ENCODE measurements at regions of chr1 and their contacts with region 1.

Region 1: DNA sequence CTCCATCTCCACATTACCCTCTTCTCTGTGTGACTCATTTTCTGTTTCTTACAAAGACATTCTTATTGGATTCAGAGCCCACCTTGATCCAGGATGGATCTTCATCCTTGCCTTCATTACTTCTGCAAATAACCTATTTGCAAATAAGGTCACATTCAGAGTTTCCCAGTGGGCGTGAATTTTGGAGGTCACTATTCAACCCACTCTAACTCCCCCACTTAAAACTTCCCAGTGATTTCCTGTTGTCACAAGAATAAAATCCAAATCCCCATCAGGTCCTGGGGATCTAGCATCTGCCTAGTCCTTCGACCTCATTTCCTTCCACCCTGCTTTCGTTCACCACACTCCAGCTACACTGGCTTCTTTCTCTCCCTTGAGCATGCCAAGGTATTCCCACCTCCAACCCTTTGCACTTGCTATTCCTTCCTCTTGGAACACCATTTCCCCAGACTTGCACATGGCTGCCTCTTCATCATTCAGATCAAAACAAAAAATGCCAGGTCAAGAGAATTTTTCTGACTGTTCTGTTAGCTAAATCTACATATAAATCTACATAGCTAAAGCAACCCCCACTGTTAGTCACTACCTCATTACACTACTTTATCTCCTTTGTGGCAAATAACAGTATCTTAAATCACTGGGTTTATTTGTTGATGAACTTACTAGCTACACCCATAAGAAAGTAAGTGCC is 187.2 kb downstream of the TOMM20 start:
- DNase-seq: no peak
- H3K4me3 Mint-ChIP-seq: no peak overlapping the region
- H3K27ac Mint-ChIP-seq: no peak overlapping the region
- H3K4me1 Mint-ChIP-seq: peaks cover 40% of the 10 kb centered on the region
- H3K27me3 Mint-ChIP-seq: no peaks in the 10 kb centered on the region

Region 2: DNA sequence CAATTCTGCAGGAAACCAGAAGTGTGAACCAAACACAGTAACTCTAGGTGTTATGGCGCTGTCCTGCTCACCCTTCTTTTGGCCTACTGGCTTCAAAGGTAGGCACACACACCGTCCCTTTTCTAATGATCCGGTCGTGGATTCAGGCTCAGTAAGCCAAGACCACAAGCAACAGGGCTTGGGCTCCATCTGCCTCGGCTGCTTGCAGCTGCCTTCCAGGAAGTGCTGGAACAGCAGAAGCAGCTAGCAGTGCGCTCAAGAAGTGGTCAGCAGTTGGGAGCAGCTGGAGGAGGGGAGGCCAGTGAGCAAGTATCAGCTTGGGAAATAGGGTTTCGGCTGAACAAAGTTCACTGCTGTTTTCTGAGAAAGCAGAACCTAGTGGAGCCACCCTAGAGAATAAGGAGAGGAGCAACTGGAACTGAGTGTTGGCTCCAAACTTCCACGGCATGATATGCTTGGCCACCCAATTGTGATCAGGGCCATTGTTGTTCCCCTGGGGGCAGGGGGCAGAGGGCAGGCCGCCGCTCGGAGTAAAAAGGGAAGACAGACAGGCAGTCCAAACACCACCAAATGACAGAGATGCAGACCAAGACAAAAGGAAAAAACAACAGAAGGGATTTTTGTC is 13.8 kb after region 1 on chr1:
- intact Hi-C with region 1: loop called (anchors 1 kb)
- DNase-seq: no peak
- H3K4me3 Mint-ChIP-seq: no peak overlapping the region
- H3K27ac Mint-ChIP-seq: peak overlapping the region; percentile 92
- H3K4me1 Mint-ChIP-seq: peaks cover 57% of the 10 kb centered on the region
- H3K27me3 Mint-ChIP-seq: no peaks in the 10 kb centered on the region

Region 3: DNA sequence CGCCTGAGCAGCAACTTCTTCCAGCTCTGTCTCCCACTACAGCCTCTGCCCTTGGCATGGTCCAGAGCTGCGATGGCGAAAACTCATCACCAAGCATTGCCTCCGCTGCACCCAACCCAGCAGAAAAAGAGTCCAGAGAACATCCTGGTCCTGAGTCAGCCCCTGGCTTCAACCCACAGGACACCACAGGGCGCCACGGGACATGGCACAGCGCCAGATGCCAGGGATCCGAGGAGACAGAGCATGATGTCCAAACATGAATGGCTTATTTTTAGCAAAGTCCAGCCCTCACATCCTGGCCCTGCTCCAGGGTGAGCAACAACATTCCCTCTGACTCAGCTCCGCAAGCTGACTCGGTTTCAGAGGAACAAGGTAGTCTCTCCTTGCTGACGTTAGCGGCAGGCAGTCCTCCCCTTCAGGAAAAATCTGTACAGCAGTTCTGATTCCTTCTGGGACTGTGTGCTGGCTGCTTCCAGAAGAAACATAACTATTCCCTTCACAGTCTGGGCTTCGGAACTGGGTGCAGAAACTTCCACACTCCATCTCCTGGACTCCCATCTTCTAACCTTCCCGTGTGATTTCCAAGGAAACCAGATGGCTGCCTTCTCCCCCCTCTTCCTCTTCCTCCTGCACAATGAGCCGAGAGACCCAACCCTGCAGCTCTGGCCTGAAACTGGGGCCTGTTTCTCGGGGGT is 55.9 kb after region 1 on chr1:
- intact Hi-C with region 1: no loop called
- DNase-seq: no peak
- H3K4me3 Mint-ChIP-seq: no peak overlapping the region
- H3K27ac Mint-ChIP-seq: no peak overlapping the region
- H3K4me1 Mint-ChIP-seq: peaks cover 22% of the 10 kb centered on the region
- H3K27me3 Mint-ChIP-seq: no peaks in the 10 kb centered on the region

Measured in activated T-helper 2 cell treated with anti-CD3 and anti-CD28 coated beads, Interferon-gamma antibody, Interleukin-2, Interleukin-4, amounts not matched to agents 10 μg/mL and 5 μg/mL and 100 μg/mL, durations not matched to agents 14 hours and 24 hours and 36 hours (primary cell).